Astrocyte of the cerebellum (primary cell): ENCODE measurements at regions of chr1 and their contacts with region 1.

Region 1: DNA sequence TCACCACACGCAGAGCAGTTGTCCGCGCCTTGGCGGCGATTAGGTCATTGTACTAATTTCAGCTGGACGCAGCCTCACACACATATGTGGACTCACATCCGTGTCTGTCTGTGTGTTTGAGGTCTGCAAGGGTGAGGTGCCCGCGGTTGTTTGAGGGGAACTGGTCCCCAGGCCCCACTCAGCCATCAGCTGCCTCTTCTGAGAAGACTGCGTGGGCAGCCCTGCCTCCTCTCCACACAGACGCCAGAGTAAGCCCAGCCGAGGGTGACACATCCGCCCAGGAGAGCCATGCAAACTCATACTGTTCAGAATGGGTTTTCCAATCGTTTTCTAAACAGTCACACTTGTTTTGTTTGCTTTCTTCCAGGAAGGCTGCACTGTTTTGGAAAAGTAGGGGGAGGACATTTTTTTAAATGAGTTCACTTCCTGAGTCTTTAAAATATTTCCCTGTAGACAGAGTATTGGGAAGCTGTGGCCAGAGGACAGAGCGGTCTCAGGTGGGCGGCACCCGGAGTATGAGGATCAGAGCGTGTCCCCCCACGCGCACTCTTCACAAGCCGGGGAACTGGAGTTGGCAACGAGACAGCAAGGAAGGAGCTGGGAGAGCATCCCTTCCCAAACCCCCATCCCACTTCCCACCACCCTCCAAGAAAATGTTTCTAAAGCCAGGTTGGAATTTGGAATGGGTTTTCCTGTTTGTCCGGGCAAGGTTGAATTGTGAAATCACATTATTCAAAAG is 53.3 kb downstream of the TOMM20 start:
- DNase-seq: peak; percentile 32
- H3K4me3 ChIP-seq: no peak overlapping the region
- CTCF ChIP-seq: no peak

Region 2: GRCh38 chr1:234610348-234611152 is 464.8 kb before region 1 on chr1:
- in situ Hi-C with region 1: loop called (anchors 10 kb)
- DNase-seq: peak; percentile 85
- H3K4me3 ChIP-seq: peak overlapping the region; percentile 44
- CTCF ChIP-seq: no peak

Region 3: GRCh38 chr1:234978397-234979295 is 96.7 kb before region 1 on chr1:
- in situ Hi-C with region 1: loop called (anchors 5 kb)
- DNase-seq: no peak
- H3K4me3 ChIP-seq: no peak overlapping the region
- CTCF ChIP-seq: no peak

Region 4: DNA sequence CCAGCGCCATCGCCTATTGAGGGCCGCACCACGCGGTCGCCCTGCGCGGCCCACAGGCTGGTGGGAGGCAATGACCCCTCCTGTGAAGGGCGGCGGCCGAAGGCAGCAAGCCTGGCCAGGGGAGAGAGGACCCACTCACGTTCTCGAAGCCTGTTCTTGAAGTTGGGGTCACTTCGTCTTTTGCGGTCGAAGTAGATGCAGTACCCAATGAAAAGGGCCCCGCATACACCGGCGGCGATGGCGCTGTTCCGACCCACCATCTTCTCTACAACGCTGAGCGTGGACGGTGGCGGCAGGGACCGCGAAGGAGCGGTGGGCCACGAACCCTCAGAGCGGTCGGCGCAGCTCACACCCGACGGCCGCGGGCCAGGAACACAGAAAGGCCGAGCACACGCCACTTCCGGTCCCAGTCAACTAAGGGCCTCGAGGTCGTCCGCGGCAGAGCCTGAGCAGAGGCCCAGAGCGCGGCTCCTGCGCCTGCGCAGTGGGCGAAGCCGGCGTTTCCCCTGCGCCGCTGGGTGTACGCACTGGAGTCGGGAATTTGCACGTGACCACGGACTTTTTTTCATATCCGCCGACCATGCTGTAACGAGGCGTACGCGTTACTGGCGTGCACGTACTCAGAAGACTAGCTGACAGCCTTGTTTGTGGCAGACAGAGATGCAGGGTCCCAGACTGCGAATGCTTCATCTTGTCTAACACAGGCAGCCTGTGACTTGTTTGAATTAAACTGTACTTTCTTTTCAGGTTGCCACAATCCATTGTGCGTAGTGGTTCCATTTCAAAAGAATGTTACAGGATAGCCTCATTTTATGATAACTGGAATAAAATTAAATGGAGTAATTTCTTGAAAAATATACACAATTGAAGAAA is 53.3 kb after region 1 on chr1 and contains the start of gene TOMM20:
- in situ Hi-C with region 1: no loop called
- DNase-seq: peak; percentile 95
- H3K4me3 ChIP-seq: peak within 1 kb of the TSS; percentile 99
- CTCF ChIP-seq: no peak